MCF 10A (cell line): ENCODE measurements at regions of chr9 and their contacts with region 1.

Region 1: GRCh38 chr9:38088006-38088925 is 19.2 kb upstream of the SHB start:
- DNase-seq: peak; percentile 66
- H3K4me3 Mint-ChIP-seq: no peak overlapping the region
- H3K27ac Mint-ChIP-seq: no peak overlapping the region
- H3K4me1 Mint-ChIP-seq: no peaks in the 10 kb centered on the region
- H3K27me3 Mint-ChIP-seq: no peaks in the 10 kb centered on the region
- CTCF ChIP-seq: peak; percentile 97

Region 2: GRCh38 chr9:37913480-37914153 is 174.6 kb before region 1 on chr9:
- CTCF ChIA-PET with region 1: interaction called, 34 read pairs
- POLR2A ChIA-PET with region 1: interaction called, 3 read pairs
- intact Hi-C with region 1: loop called (anchors 2 kb)
- DNase-seq: peak; percentile 77
- H3K4me3 Mint-ChIP-seq: no peak overlapping the region
- H3K27ac Mint-ChIP-seq: no peak overlapping the region
- H3K4me1 Mint-ChIP-seq: peaks cover 14% of the 10 kb centered on the region
- H3K27me3 Mint-ChIP-seq: no peaks in the 10 kb centered on the region
- CTCF ChIP-seq: peak; percentile 97

Region 3: DNA sequence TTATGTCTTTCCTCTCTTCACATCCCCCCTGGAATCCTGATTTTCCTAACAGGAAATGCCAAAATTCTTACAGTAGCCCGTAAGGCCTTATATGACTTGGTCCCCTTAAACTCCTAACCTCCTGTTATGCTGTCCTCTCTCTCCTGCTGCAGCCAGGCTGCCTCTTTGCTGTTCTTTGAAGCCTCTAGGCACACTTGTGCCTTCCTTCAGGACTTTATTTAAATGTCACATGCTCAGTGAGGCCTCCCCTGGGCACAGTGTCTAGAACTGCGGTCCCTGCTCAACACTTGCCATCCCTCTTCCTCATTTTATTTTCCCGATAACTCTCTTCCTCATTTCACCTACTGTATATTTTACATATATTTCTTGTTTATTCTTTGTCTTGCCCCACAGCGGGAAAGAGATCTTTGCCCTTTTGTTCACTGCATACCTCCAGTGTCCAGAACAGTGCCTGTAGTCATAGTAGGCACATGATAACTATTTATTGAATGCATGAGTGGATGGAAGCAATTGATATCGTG is 13.8 kb before region 1 on chr9:
- CTCF ChIA-PET with region 1: interaction called, 29 read pairs
- POLR2A ChIA-PET with region 1: no interaction called
- intact Hi-C with region 1: no loop called
- DNase-seq: no peak
- H3K4me3 Mint-ChIP-seq: no peak overlapping the region
- H3K27ac Mint-ChIP-seq: no peak overlapping the region
- H3K4me1 Mint-ChIP-seq: no peaks in the 10 kb centered on the region
- H3K27me3 Mint-ChIP-seq: no peaks in the 10 kb centered on the region
- CTCF ChIP-seq: no peak

Region 4: GRCh38 chr9:38160613-38161215 is 72.4 kb after region 1 on chr9:
- CTCF ChIA-PET with region 1: interaction called, 46 read pairs
- POLR2A ChIA-PET with region 1: no interaction called
- intact Hi-C with region 1: loop called (anchors 2 kb)
- DNase-seq: peak; percentile 77
- H3K4me3 Mint-ChIP-seq: no peak overlapping the region
- H3K27ac Mint-ChIP-seq: no peak overlapping the region
- H3K4me1 Mint-ChIP-seq: no peaks in the 10 kb centered on the region
- H3K27me3 Mint-ChIP-seq: no peaks in the 10 kb centered on the region
- CTCF ChIP-seq: peak; percentile 85

Region 5: DNA sequence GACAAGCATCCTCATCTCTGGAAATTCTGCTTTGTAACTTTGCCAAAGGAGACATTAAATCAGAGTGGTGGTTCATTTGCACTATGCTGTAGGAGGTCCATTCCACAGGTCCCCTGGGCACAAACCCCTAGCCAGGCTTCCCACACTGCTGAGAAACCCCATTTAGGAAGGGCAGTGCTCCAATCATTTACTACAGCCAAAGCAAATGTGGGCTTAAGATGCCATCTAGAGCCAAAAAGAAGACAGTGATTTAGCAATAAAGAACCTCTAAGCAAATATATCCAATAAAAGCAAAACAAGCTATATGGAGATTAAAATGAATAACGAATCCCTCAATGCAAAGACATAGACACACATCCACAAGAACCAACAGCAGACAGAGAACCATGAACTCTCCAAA is 175.3 kb after region 1 on chr9:
- CTCF ChIA-PET with region 1: interaction called, 42 read pairs
- POLR2A ChIA-PET with region 1: no interaction called
- intact Hi-C with region 1: loop called (anchors 1 kb)
- DNase-seq: peak; percentile 43
- H3K4me3 Mint-ChIP-seq: no peak overlapping the region
- H3K27ac Mint-ChIP-seq: no peak overlapping the region
- H3K4me1 Mint-ChIP-seq: no peaks in the 10 kb centered on the region
- H3K27me3 Mint-ChIP-seq: peaks cover 67% of the 10 kb centered on the region
- CTCF ChIP-seq: peak; percentile 48

Region 6: GRCh38 chr9:38362852-38363593 is 274.8 kb after region 1 on chr9:
- CTCF ChIA-PET with region 1: interaction called, 11 read pairs
- POLR2A ChIA-PET with region 1: no interaction called
- intact Hi-C with region 1: loop called (anchors 1 kb)
- DNase-seq: peak; percentile 74
- H3K4me3 Mint-ChIP-seq: no peak overlapping the region
- H3K27ac Mint-ChIP-seq: no peak overlapping the region
- H3K4me1 Mint-ChIP-seq: peaks cover 8% of the 10 kb centered on the region
- H3K27me3 Mint-ChIP-seq: no peaks in the 10 kb centered on the region
- CTCF ChIP-seq: peak; percentile 66

Region 7: GRCh38 chr9:38405785-38406184 is 317.5 kb after region 1 on chr9:
- CTCF ChIA-PET with region 1: interaction called, 11 read pairs
- POLR2A ChIA-PET with region 1: no interaction called
- intact Hi-C with region 1: no loop called
- DNase-seq: no peak
- H3K4me3 Mint-ChIP-seq: no peak overlapping the region
- H3K27ac Mint-ChIP-seq: no peak overlapping the region
- H3K4me1 Mint-ChIP-seq: no peaks in the 10 kb centered on the region
- H3K27me3 Mint-ChIP-seq: peaks cover 51% of the 10 kb centered on the region
- CTCF ChIP-seq: no peak